CD14-positive monocyte (primary cell): ENCODE measurements at regions of chr7 and their contacts with region 1.

Region 1: DNA sequence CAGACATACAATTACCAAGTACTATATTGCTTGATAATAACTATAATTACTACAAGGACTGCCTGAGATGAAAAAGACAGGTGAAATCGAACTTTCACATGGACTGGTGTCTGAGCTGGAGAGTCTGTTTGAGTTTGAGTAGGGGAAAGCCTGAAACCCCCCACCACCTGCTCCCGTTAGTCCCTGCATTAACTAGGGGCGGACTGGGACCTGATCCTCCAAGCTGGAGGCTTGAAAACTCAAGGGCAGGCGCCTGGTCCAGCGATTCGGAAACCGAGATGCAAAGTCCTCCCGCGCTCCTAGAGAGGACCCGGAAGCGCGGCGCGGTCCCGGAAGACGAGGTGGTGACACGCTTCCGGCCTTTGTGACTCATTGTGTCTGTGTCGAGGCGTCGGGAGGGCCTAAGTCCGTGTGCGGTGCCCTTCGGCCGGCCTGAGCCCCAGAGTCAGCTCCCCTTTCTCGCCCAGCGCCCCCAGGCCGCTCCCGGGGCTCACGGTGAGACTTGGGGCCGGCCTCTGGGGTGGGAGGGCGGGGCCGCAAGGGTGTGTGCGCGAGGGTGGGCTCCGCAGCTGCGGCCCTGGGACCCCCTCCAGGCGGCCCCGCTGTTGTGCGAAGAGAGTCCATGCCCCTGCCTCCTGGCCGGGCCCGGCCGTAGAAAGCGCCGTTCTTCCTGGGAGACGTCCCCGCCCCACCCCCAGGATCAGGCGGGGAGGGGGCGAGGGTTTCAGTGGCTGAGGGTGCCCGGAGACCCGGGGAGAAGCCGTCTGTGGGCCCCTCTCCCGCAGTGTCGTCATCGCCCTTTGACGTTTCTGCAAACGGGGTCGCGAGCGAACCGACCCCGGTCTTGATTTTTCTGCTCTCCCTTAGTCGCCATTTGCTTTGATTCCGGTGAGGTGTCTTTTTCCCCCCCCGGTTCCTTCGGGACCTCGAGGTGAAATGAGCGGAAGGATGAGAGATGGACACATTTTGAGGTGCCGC is at the start of gene ZKSCAN1:
- DNase-seq: peak; percentile 95 to 97 (median 95)
- H3K4me3 ChIP-seq: peak within 1 kb of the TSS; percentile 82 to 100 (median 97)
- H3K4me3 Mint-ChIP-seq: peak within 1 kb of the TSS; percentile 93 to 94
- H3K27ac ChIP-seq: peak within 1 kb of the TSS; percentile 85 to 94
- H3K27ac Mint-ChIP-seq: peak within 1 kb of the TSS; percentile 94 to 99 (median 97)
- H3K4me1 ChIP-seq: peaks cover 28 to 38% of the 10 kb centered on the region in 2 donors
- H3K4me1 Mint-ChIP-seq: peaks cover 43% of the 10 kb centered on the region
- H3K27me3 ChIP-seq: no peaks in the 10 kb centered on the region
- H3K27me3 Mint-ChIP-seq: peaks cover 0 to 2% (median 0%) of the 10 kb centered on the region in 3 donors
- CTCF ChIP-seq: no peak
- polyA plus RNA-seq, gene ZKSCAN1: 10.4 to 24.3 (median 10.7) TPM

Region 2: DNA sequence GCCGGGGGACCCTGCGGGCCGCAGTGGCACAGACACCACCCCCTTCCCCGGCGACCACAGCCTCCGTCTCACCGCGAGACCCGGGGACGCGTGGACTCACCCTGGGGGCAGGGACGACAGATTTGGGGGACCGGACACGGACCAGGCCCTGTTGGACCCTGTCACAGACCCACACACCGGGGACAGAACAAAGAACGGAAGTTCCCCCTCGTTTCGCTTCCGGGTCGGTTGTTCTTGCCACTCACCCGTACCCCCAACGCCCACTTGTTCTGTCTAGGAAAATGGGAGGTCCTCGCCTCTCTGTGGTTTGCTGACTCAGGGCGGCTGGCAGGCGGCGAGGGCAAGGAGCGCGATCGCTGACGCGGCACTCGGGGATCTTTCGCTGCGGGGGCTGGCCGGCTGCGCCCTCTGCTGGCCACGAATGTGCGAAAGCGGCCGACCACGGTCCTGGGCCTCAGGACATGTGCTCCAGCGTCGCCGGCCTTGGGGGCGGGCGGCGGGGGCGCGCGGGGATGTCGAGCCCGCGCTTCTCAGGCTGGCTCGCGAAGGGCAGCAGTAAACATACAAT is 66.1 kb after region 1 on chr7 and contains the start of gene ZNF3:
- intact Hi-C with region 1: loop called (anchors 10 kb)
- DNase-seq: peak; percentile 98 to 99 (median 99)
- H3K4me3 ChIP-seq: peak within 1 kb of the TSS; percentile 44 to 94 (median 81)
- H3K4me3 Mint-ChIP-seq: peak within 1 kb of the TSS; percentile 82 to 92
- H3K27ac ChIP-seq: peak within 1 kb of the TSS; percentile 69 to 86
- H3K27ac Mint-ChIP-seq: peak within 1 kb of the TSS; percentile 89 to 96 (median 93)
- H3K4me1 ChIP-seq: peaks cover 36 to 40% of the 10 kb centered on the region in 2 donors
- H3K4me1 Mint-ChIP-seq: peaks cover 37% of the 10 kb centered on the region
- H3K27me3 ChIP-seq: no peaks in the 10 kb centered on the region
- H3K27me3 Mint-ChIP-seq: peaks cover 8 to 15% (median 13%) of the 10 kb centered on the region in 3 donors
- CTCF ChIP-seq: peak; percentile 95
- polyA plus RNA-seq, gene ZNF3: 7.1 to 13.4 (median 8.9) TPM